HCT116 (cell line): ENCODE measurements at regions of chr10 and their contacts with region 1.

Region 1: DNA sequence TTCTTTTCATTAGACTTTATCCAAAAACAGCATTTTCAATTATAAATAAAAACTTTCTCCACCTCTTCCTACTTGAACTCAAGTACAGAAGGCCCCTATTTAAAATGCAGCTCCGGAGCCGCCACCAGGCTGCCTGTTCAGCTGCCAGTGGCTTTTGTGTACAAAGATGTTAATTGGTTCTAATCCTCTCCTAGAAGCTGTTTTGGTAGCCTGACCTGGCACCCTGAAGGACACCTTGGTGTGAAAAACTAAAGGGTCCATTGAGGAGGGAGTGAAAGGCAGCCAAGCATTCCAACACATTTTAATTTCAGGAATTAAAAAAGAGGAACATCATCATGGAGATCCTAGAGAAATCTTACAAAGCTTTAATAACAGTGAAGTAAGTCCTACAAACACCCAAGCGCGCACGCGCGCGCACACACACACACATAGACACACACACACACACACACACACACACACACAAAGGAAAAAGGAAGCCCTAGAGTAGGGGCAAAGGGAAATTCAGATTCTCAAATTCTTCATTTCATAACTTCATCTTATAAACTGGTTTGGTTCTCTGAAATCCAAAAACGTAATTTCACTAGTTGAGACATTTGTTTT is 41.4 kb downstream of the VAX1 start:
- DNase-seq: no peak
- ATAC-seq: no peak
- H3K4me3 ChIP-seq: no peak overlapping the region
- H3K27ac ChIP-seq: no peak overlapping the region
- H3K4me1 ChIP-seq: no peaks in the 10 kb centered on the region
- H3K27me3 ChIP-seq: no peaks in the 10 kb centered on the region
- CTCF ChIP-seq: no peak
- POLR2A ChIP-seq: no peak
- RAD21 ChIP-seq: no peak

Region 2: DNA sequence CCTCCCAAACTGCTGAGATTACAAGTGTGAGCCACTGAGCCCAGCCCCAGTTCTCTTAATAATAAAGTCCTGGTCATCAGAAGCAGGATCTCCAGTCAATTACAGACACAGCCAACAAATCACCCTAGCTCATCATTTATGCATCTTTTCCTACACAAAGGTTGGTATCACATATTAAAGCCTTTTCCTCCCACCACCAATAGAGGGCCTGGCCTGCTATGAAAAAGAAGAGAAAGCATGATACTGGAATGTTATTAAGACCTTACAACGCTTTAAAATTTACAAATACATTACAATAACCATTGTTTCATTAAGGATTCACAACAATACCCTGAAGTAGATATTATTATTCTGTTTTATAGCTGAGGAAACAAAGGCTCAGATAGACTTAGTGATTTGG is 15.5 kb after region 1 on chr10:
- CTCF ChIA-PET with region 1: interaction called, 22 read pairs
- POLR2A ChIA-PET with region 1: no interaction called
- RAD21 ChIA-PET with region 1: no interaction called
- intact Hi-C with region 1: no loop called
- DNase-seq: peak; percentile 15
- ATAC-seq: peak; percentile 93
- H3K4me3 ChIP-seq: no peak overlapping the region
- H3K27ac ChIP-seq: no peak overlapping the region
- H3K4me1 ChIP-seq: no peaks in the 10 kb centered on the region
- H3K27me3 ChIP-seq: no peaks in the 10 kb centered on the region
- CTCF ChIP-seq: peak; percentile 50 to 84 (median 80); a peak in 5 of 6 replicates
- POLR2A ChIP-seq: no peak
- RAD21 ChIP-seq: peak; percentile 56

Region 3: GRCh38 chr10:117216611-117217195 is 120.0 kb after region 1 on chr10:
- CTCF ChIA-PET with region 1: no interaction called
- POLR2A ChIA-PET with region 1: no interaction called
- RAD21 ChIA-PET with region 1: no interaction called
- intact Hi-C with region 1: no loop called
- DNase-seq: peak; percentile 54
- ATAC-seq: peak; percentile 84
- H3K4me3 ChIP-seq: peak overlapping the region; percentile 19 to 27
- H3K27ac ChIP-seq: peak overlapping the region; percentile 6; the same call in 1 of the 2 replicates
- H3K4me1 ChIP-seq: peaks cover 2 to 21% of the 10 kb centered on the region in 2 experiments; a peak in 2 of 4 replicates
- H3K27me3 ChIP-seq: peaks cover 6% of the 10 kb centered on the region; the same call in 1 of the 2 replicates
- CTCF ChIP-seq: peak; percentile 100
- POLR2A ChIP-seq: no peak
- RAD21 ChIP-seq: peak; percentile 99

Region 4: DNA sequence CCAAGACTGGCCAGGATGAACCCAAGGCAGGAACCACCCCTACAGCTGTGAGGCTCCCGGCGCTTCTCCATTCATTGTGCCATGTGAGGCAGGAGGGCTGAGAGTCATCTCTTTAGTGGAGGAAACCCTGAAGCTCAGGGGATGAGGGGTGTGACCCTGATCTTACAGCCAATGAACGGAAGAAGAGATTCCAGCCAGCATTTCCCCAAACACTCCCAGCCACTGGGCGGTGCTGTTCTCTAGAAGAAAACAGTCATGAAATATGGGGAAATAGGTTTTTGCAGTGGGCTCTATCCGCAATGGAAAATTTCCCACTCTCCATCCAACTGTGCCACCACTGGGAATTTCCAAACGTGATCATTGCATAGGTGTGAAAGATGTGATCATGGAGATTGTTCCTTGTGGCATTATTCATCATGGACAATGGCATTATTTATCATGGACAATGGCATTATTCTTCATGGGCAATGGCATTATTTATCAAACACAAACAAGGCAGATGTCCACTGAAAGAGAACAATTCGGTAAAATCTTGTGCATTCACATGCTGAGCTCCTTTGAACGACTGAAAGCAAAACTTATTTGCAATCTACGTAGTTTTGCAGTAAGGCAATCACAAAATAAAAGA is 130.2 kb after region 1 on chr10:
- CTCF ChIA-PET with region 1: no interaction called
- POLR2A ChIA-PET with region 1: no interaction called
- RAD21 ChIA-PET with region 1: no interaction called
- intact Hi-C with region 1: no loop called
- DNase-seq: peak; percentile 67
- ATAC-seq: peak; percentile 98
- H3K4me3 ChIP-seq: no peak overlapping the region
- H3K27ac ChIP-seq: no peak overlapping the region
- H3K4me1 ChIP-seq: peaks cover 0 to under 1% of the 10 kb centered on the region in 2 experiments; a peak in 1 of 4 replicates
- H3K27me3 ChIP-seq: peaks cover 28% of the 10 kb centered on the region; the same call in 1 of the 2 replicates
- CTCF ChIP-seq: peak; percentile 91 to 96 (median 91)
- POLR2A ChIP-seq: no peak
- RAD21 ChIP-seq: peak; percentile 91